WTC11 (cell line): ENCODE measurements at regions of chr9 and their contacts with region 1.

Region 1: DNA sequence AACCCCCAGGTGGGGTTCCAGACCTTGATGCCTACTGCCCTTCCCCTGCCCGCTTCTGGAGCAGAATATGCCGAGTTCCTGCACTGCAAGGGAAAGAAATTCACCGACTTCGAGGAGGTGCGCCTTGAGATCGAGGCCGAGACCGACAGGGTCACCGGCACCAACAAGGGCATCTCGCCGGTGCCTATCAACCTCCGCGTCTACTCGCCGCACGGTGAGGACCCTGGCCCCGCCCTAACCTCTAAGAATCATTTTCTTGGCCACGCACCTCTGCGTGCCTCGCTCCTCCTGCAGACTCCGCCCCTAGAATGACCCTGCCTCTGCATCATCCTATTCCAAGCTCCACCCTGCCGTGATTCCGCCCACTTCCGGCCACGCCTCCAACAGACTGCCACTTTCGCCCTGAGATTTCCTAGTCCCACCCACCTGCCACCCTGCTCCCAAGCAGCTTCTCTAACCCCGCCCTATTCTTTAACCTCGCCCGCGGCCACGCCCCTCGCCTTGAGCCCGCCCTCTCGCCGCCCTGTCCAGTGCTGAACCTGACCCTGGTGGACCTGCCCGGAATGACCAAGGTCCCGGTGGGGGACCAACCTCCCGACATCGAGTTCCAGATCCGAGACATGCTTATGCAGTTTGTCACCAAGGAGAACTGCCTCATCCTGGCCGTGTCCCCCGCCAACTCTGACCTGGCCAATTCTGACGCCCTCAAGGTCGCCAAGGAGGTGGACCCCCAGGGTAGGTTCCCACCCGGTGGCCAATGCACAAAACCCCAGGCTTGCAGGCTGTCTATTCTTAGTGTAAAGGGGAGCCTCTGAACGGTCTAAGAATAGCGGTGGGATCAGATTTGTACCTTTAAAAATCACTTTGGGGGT is 15.6 kb downstream of the DNM1 start:
- DNase-seq: peak; percentile 99
- ATAC-seq: peak; percentile 97
- H3K4me3 Mint-ChIP-seq: peak overlapping the region; percentile 75
- H3K27ac Mint-ChIP-seq: peak overlapping the region; percentile 97
- H3K4me1 Mint-ChIP-seq: peaks cover 12% of the 10 kb centered on the region
- H3K27me3 Mint-ChIP-seq: peaks cover 4% of the 10 kb centered on the region; the same call in 1 of the 2 replicates
- CTCF ChIP-seq: no peak

Region 2: DNA sequence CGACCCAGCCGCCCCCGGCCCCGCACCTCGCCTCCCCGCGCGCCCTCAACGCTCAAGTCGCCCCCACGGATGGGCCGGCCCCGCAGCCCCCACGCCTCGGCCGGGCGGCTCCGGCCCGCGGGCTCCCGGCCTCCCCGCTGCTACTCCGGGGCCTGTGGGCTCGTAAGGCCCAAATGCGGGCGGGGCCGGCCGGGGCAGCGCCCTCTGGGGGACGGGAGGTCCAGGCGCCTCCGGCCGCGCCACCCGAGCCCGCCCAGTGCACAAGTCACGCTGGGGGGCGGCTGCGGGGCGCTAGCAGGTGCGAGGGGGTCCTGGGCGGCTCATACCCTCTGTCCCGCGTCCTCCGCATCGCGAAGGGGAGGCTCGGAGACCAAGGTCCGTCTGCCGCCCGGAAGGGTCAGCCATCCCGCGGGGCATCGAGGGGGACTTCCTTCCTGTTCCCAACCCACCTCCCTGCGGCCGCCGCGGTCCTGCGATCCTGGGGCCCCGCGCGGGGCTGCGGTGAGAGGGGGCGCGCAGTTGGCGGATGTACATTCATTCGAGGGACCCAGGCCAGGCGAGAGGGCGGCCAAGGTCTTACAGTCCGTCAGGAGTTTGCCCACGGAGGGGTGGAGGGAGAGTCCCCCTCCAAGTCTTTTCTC is 27.2 kb before region 1 on chr9 and contains the start of gene CIZ1:
- CTCF ChIA-PET with region 1: interaction called, 18 read pairs
- POLR2A ChIA-PET with region 1: no interaction called
- DNase-seq: peak; percentile 75
- ATAC-seq: peak; percentile 91
- H3K4me3 Mint-ChIP-seq: peak within 1 kb of the TSS; percentile 90
- H3K27ac Mint-ChIP-seq: no peak within 1 kb of the TSS
- H3K4me1 Mint-ChIP-seq: peaks cover 11% of the 10 kb centered on the region
- H3K27me3 Mint-ChIP-seq: peaks cover 10% of the 10 kb centered on the region
- CTCF ChIP-seq: peak; percentile 40; the same call in 1 of the 2 replicates
- total RNA-seq, gene CIZ1: 86.1 to 90.6 TPM (median 90.2 TPM) in 3 replicates

Region 3: DNA sequence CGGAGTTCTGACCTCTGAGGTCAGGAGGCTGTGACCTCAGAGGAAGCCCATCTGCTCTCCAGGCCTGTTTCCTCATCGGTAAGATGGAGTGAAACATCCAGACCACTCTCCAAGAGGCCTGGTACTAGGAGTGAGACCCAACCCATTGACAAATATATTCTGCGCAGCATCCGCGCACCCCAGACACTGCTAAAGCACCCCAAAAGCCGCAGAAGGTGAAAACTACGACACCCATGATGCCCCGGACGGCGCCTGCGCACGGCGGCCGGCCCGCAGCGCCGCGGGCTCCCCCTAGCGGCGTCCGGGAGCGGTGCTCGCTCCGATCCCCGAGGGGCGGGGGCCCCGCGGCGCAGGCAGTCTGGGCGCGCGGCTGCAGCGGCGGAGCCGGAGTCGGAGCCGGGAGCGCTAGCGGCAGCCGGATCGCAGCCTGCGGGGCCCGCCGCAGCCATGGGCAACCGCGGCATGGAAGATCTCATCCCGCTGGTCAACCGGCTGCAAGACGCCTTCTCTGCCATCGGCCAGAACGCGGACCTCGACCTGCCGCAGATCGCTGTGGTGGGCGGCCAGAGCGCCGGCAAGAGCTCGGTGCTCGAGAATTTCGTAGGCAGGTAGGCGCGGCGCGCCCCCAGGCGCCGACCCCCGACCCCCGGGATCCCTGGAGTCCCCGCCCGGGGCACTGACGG is 15.6 kb before region 1 on chr9 and contains the start of gene DNM1:
- CTCF ChIA-PET with region 1: interaction called, 23 read pairs
- POLR2A ChIA-PET with region 1: interaction called, 5 read pairs
- DNase-seq: peak; percentile 73
- ATAC-seq: peak; percentile 74
- H3K4me3 Mint-ChIP-seq: peak within 1 kb of the TSS; percentile 76
- H3K27ac Mint-ChIP-seq: peak within 1 kb of the TSS; percentile 3; the same call in 1 of the 2 replicates
- H3K4me1 Mint-ChIP-seq: peaks cover 24% of the 10 kb centered on the region
- H3K27me3 Mint-ChIP-seq: no peaks in the 10 kb centered on the region
- CTCF ChIP-seq: peak; percentile 94
- total RNA-seq, gene DNM1: 79.0 to 105 TPM (median 92.4 TPM) in 3 replicates